HCT116 (cell line): ENCODE measurements at regions of chr6 and their contacts with region 1.

Region 1: GRCh38 chr6:137165375-137166246 is 7.8 kb downstream of the IL22RA2 start:
- DNase-seq: peak; percentile 6
- ATAC-seq: peak; percentile 90
- H3K4me3 ChIP-seq: no peak overlapping the region
- H3K27ac ChIP-seq: no peak overlapping the region
- H3K4me1 ChIP-seq: no peaks in the 10 kb centered on the region
- H3K27me3 ChIP-seq: no peaks in the 10 kb centered on the region
- CTCF ChIP-seq: peak; percentile 47 to 81 (median 71); a peak in 5 of 6 replicates
- POLR2A ChIP-seq: no peak
- RAD21 ChIP-seq: peak; percentile 67

Region 2: DNA sequence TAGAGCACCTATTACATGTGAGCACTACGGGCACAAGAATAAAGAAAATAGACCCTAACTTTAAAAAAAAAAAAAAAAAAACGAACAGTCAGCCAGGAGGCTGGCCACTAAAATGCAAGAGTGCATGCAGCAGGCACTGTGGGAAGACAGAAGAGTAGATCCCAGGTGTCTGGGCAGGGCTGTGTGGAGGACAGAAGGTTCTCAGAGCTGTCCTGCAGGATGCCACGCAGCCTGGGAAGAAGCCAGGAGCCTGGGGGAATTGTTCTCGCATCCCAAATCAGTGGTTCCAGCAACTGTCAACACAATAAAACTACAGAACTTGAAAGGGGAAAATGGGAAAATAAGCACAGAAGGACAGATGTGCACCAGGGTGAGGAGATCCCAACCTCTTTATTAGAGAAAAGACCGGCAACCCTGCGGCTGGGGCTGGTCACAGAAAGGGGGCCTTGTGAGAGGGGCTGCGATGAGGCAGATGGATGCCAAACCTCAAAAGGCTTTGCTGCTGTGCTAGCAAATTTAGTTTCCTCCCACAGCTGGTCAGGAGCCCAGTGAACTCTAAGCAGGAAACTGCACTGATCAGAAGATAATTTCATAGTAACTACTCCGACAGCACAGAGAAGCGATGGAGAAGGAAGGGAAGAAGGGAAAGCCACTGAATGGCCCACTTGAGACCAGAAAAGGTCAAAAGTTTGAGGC is 404.2 kb before region 1 on chr6:
- CTCF ChIA-PET with region 1: no interaction called
- POLR2A ChIA-PET with region 1: no interaction called
- RAD21 ChIA-PET with region 1: no interaction called
- intact Hi-C with region 1: no loop called
- DNase-seq: no peak
- ATAC-seq: no peak
- H3K4me3 ChIP-seq: no peak overlapping the region
- H3K27ac ChIP-seq: no peak overlapping the region
- H3K4me1 ChIP-seq: no peaks in the 10 kb centered on the region
- H3K27me3 ChIP-seq: no peaks in the 10 kb centered on the region
- CTCF ChIP-seq: no peak
- POLR2A ChIP-seq: no peak
- RAD21 ChIP-seq: no peak

Region 3: GRCh38 chr6:136967876-136968752 is 197.5 kb before region 1 on chr6:
- CTCF ChIA-PET with region 1: no interaction called
- POLR2A ChIA-PET with region 1: no interaction called
- RAD21 ChIA-PET with region 1: no interaction called
- intact Hi-C with region 1: loop called (anchors 5 kb)
- DNase-seq: peak; percentile 75
- ATAC-seq: peak; percentile 99
- H3K4me3 ChIP-seq: no peak overlapping the region; a peak in 1 of 4 replicates
- H3K27ac ChIP-seq: no peak overlapping the region
- H3K4me1 ChIP-seq: peaks cover 0 to 5% of the 10 kb centered on the region in 2 experiments; a peak in 2 of 4 replicates
- H3K27me3 ChIP-seq: no peaks in the 10 kb centered on the region
- CTCF ChIP-seq: peak; percentile 59 to 82 (median 76)
- POLR2A ChIP-seq: no peak
- RAD21 ChIP-seq: peak; percentile 87

Region 4: DNA sequence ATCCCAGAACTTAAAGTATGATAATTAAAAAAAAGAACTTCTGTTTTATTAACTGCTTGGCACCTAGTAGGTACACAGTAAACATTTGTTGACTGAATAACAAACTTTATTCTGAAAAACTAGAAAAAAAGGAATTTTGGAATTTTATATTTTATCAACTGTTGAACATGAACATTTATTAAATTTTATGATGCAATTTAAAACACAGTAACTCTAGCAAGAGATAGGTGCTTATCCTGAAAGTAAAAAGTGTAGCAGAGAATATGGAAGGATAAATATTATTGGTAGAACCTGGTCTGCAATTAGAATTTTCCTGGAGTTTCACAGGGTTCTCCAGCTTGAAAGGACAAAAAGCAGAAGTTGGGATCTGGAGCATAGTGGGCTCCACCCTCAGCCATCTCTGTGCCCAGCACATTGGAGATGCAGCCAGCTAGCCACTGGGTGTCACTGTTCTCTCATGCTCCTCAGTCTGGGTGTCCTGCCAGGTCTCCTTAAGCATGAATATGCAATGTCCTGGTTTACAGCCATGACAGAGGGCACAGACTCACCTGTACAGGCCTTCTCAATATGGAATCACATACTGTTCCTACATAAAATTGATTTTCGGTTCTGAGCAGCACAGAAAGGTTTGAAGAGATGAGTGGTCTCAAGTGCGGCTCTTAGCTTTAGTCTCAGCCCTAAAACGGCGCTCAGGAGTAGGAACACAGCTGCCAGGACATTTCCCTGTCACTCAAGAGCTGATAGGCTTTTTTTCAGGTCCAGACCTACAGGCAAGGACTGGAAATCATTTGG is 89.1 kb before region 1 on chr6:
- CTCF ChIA-PET with region 1: interaction called, 19 read pairs
- POLR2A ChIA-PET with region 1: no interaction called
- RAD21 ChIA-PET with region 1: interaction called in 1 of 2 experiments, 4 read pairs
- intact Hi-C with region 1: no loop called
- DNase-seq: peak; percentile 82
- ATAC-seq: peak; percentile 100
- H3K4me3 ChIP-seq: no peak overlapping the region
- H3K27ac ChIP-seq: no peak overlapping the region
- H3K4me1 ChIP-seq: no peaks in the 10 kb centered on the region
- H3K27me3 ChIP-seq: no peaks in the 10 kb centered on the region
- CTCF ChIP-seq: peak; percentile 73 to 94 (median 90)
- POLR2A ChIP-seq: no peak
- RAD21 ChIP-seq: peak; percentile 92

Region 5: GRCh38 chr6:137094411-137095008 is 71.1 kb before region 1 on chr6:
- CTCF ChIA-PET with region 1: interaction called, 25 read pairs
- POLR2A ChIA-PET with region 1: no interaction called
- RAD21 ChIA-PET with region 1: interaction called in 1 of 2 experiments, 5 read pairs
- intact Hi-C with region 1: loop called (anchors 1 kb)
- DNase-seq: peak; percentile 56
- ATAC-seq: peak; percentile 88
- H3K4me3 ChIP-seq: no peak overlapping the region
- H3K27ac ChIP-seq: no peak overlapping the region
- H3K4me1 ChIP-seq: peaks cover 0 to 3% of the 10 kb centered on the region in 2 experiments; a peak in 2 of 4 replicates
- H3K27me3 ChIP-seq: no peaks in the 10 kb centered on the region
- CTCF ChIP-seq: peak; percentile 62 to 87 (median 84)
- POLR2A ChIP-seq: no peak
- RAD21 ChIP-seq: peak; percentile 87

Region 6: DNA sequence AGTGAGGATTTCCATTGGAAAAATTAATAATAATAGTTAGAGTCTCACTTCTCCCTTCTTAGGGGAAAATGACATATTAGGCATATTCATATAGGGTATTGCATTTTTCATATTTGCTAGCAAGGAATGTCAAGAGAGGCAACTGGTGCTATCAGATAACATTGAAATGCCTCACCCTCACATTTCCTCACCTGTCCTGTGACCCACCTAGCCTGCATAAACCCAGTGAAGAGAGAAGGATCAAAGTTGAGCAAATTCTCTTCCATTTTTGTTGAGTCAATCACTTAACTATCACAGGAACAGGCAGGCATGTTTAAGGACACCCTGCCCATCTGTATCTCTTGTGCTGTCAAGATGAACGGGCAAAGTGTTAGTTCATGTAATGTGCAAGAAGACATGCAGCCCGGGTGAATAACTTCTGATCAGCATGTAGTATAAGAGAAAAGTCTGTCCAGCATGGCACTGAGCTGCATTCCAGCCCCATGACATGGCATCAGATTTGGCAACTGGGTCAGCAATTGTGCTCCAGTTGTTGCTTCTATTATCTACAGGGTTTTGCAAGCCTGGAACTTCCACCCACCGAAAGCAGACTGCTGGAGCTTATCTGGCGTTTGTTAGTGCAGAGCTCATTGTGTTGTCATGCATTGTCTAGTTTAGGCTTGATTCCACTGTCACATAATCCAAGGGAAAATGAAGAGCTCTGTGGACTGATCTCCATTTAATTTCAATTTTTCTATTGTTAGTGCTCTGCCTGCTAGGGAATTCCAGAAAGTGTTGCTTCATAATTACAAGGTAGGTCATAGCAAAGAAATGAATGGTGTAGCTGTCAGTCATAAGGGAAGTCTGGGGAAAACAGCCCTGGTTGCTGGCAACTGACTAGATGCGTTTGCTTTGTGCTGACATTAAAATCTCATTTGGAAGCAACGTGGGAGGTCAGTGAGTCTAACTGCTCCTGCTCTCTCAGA is 563.1 kb after region 1 on chr6:
- CTCF ChIA-PET with region 1: no interaction called
- POLR2A ChIA-PET with region 1: no interaction called
- RAD21 ChIA-PET with region 1: no interaction called
- intact Hi-C with region 1: no loop called
- DNase-seq: no peak
- ATAC-seq: no peak
- H3K4me3 ChIP-seq: no peak overlapping the region
- H3K27ac ChIP-seq: no peak overlapping the region
- H3K4me1 ChIP-seq: peaks cover 0 to 14% of the 10 kb centered on the region in 2 experiments; a peak in 2 of 4 replicates
- H3K27me3 ChIP-seq: no peaks in the 10 kb centered on the region
- CTCF ChIP-seq: no peak
- POLR2A ChIP-seq: no peak
- RAD21 ChIP-seq: no peak